Activated CD8-positive, alpha-beta memory T cell treated with anti-CD3 and anti-CD28 coated beads, Interleukin-2, amount 10 ng/mL, durations not matched to agents 7 days and 5 days (primary cell): ENCODE measurements at regions of chr19 and their contacts with region 1.

Region 1: DNA sequence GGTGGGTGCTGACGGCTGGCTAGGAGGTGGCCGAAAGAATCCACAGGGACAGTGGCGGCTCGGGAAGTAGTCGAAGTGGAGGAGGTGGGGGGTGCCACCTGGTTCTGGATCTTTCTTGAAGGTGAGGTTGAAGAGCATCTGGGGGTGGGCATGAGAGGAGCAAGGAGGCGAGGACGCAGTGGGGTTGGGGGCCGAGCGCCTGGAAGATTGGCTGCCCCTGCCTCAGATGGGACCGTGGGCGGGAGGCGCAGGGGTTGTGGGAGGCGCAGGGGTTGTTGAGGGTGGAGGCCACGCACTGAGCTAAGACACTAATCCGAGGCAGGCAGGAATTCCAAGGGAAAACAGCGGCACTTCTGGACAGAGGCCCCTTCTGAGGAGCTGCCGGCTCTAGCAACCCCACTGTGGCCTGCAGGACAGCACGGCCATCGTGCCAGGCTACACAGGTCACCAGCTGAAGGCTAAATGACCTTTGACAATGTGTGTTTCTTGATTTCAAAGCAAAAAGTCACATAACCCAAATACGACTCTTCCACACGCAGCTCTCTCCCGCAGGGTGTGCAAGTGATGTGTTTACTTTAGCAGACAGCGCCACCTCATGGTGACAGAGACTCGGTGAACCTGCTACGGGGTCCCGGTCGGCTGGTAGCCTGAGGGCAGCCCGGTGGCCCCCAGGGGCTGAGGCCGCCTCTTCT is 44.1 kb upstream of the RANBP3 start:
- DNase-seq: peak; percentile 85
- ATAC-seq: peak; percentile 83
- H3K4me3 Mint-ChIP-seq: no peak overlapping the region
- H3K27ac Mint-ChIP-seq: no peak overlapping the region
- H3K4me1 Mint-ChIP-seq: peaks cover 1% of the 10 kb centered on the region
- H3K27me3 Mint-ChIP-seq: no peaks in the 10 kb centered on the region

Region 2: GRCh38 chr19:5977785-5978605 is 44.0 kb before region 1 on chr19 and contains the start of gene RANBP3:
- CTCF ChIA-PET with region 1: interaction called, 82 read pairs
- DNase-seq: peak; percentile 99
- ATAC-seq: peak; percentile 95
- H3K4me3 Mint-ChIP-seq: peak within 1 kb of the TSS; percentile 90
- H3K27ac Mint-ChIP-seq: peak within 1 kb of the TSS; percentile 90
- H3K4me1 Mint-ChIP-seq: peaks cover 68% of the 10 kb centered on the region
- H3K27me3 Mint-ChIP-seq: no peaks in the 10 kb centered on the region
- total RNA-seq, gene RANBP3: 97.8 to 108 TPM

Region 3: DNA sequence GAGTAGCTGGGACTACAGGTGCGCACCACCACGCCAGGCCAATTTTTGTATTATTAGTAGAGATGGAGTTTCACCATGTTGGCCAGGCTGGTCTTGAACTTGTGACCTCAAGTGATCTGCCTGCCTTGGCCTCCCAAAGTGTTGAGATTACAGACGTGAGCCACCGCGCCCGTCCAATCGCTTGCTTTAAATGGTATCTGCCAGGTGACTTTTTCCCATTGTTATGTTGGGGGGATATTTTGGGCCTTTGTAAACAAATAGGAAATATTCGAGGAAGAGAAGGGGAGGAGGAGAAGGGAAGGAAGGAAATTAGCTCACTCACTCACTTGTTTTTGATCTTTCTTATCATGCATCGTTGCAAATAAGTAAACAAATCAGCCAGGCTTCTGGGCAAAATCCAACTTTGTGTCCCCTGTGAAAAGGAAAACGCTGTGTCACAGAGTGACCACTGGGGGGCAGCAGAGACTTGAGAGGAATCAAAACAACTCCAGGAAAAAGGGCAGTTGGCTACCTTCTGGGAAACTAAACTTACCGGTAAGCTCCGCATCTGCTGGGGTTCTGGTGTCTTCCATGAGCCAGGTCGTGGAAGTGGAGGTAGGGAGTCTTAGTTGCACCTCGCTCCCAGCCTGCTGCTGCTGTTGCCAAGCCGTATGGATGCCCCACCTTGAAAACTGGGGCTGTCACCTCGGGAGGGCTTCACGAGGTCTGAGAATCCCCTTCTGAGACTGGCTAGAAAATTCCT is 34.8 kb before region 1 on chr19:
- CTCF ChIA-PET with region 1: interaction called, 82 read pairs
- DNase-seq: peak; percentile 82
- ATAC-seq: peak; percentile 22
- H3K4me3 Mint-ChIP-seq: peak overlapping the region; percentile 64
- H3K27ac Mint-ChIP-seq: peak overlapping the region; percentile 72
- H3K4me1 Mint-ChIP-seq: peaks cover 46% of the 10 kb centered on the region
- H3K27me3 Mint-ChIP-seq: no peaks in the 10 kb centered on the region

Region 4: GRCh38 chr19:6076675-6077463 is 54.8 kb after region 1 on chr19:
- CTCF ChIA-PET with region 1: no interaction called
- DNase-seq: no peak
- ATAC-seq: no peak
- H3K4me3 Mint-ChIP-seq: no peak overlapping the region
- H3K27ac Mint-ChIP-seq: no peak overlapping the region
- H3K4me1 Mint-ChIP-seq: no peaks in the 10 kb centered on the region
- H3K27me3 Mint-ChIP-seq: no peaks in the 10 kb centered on the region